ENCODE measurements at regions of chr10 and their contacts with region 1.

Region 1: GRCh38 chr10:79374312-79375191 is 27.3 kb downstream of the PPIF start:
- DNase-seq: peak in 1 of 2 donors; percentile 88
- H3K4me3 ChIP-seq: no peak overlapping the region
- H3K27ac ChIP-seq: no peak overlapping the region
- H3K4me1 ChIP-seq: peaks cover 5 to 11% of the 10 kb centered on the region in 2 donors
- H3K27me3 ChIP-seq: no peaks in the 10 kb centered on the region
- CTCF ChIP-seq: peak; percentile 94 to 99 (median 98)

Region 2: GRCh38 chr10:79463578-79464496 is 89.3 kb after region 1 on chr10:
- intact Hi-C with region 1: loop called (anchors 1 kb)
- DNase-seq: no peak
- H3K4me3 ChIP-seq: no peak overlapping the region
- H3K27ac ChIP-seq: no peak overlapping the region
- H3K4me1 ChIP-seq: no peaks in the 10 kb centered on the region
- H3K27me3 ChIP-seq: no peaks in the 10 kb centered on the region
- CTCF ChIP-seq: no peak

Region 3: GRCh38 chr10:80144067-80144695 is 769.6 kb after region 1 on chr10:
- intact Hi-C with region 1: loop called (anchors 10 kb)
- DNase-seq: no peak
- H3K4me3 ChIP-seq: no peak overlapping the region
- H3K27ac ChIP-seq: peak overlapping the region; percentile 50 to 54
- H3K4me1 ChIP-seq: peaks cover 5 to 15% of the 10 kb centered on the region in 2 donors
- H3K27me3 ChIP-seq: no peaks in the 10 kb centered on the region
- CTCF ChIP-seq: no peak

Measured in ascending aorta (tissue), 2 donors.